ENCODE measurements at regions of chr3 and their contacts with region 1.

Region 1: GRCh38 chr3:120348981-120349818 is at the start of gene LRRC58:
- DNase-seq: peak; percentile 85
- H3K4me3 Mint-ChIP-seq: peak within 1 kb of the TSS; percentile 89
- H3K27ac Mint-ChIP-seq: peak within 1 kb of the TSS; percentile 89
- H3K4me1 Mint-ChIP-seq: peaks cover 40% of the 10 kb centered on the region
- H3K27me3 Mint-ChIP-seq: no peaks in the 10 kb centered on the region
- total RNA-seq, gene LRRC58: 17.6 to 18.0 TPM

Region 2: GRCh38 chr3:119293871-119294695 is 1055.1 kb before region 1 on chr3 and contains the start of gene ARHGAP31:
- CTCF ChIA-PET with region 1: no interaction called
- intact Hi-C with region 1: loop called (anchors 10 kb)
- DNase-seq: peak; percentile 94
- H3K4me3 Mint-ChIP-seq: peak within 1 kb of the TSS; percentile 82
- H3K27ac Mint-ChIP-seq: peak within 1 kb of the TSS; percentile 92
- H3K4me1 Mint-ChIP-seq: peaks cover 36% of the 10 kb centered on the region
- H3K27me3 Mint-ChIP-seq: no peaks in the 10 kb centered on the region
- total RNA-seq, gene ARHGAP31: 3.5 to 3.7 TPM

Region 3: GRCh38 chr3:119637679-119638525 is 711.3 kb before region 1 on chr3:
- CTCF ChIA-PET with region 1: no interaction called
- intact Hi-C with region 1: loop called (anchors 1 kb)
- DNase-seq: peak; percentile 19
- H3K4me3 Mint-ChIP-seq: no peak overlapping the region
- H3K27ac Mint-ChIP-seq: peak overlapping the region; percentile 91
- H3K4me1 Mint-ChIP-seq: peaks cover 36% of the 10 kb centered on the region
- H3K27me3 Mint-ChIP-seq: no peaks in the 10 kb centered on the region

Region 4: DNA sequence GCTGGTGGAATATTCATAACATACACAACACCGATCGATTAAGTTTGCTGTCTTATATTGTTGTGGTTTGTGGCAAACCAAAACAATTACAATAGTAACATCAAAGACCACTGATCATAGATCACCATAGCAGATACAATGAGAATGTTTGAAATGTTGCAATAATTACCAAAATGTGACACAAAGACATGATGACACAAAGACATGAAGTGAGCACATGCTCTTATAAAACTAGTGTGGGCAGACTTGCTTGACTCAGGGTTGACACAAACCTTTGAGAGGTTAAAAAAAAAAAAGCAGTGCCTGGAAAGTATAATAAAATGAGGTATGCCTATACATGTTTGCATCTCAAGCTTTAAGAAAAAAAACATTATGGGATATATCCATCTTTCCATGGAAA is 437.0 kb before region 1 on chr3:
- CTCF ChIA-PET with region 1: no interaction called
- intact Hi-C with region 1: loop called (anchors 1 kb)
- DNase-seq: no peak
- H3K4me3 Mint-ChIP-seq: no peak overlapping the region
- H3K27ac Mint-ChIP-seq: peak overlapping the region; percentile 77
- H3K4me1 Mint-ChIP-seq: peaks cover 33% of the 10 kb centered on the region
- H3K27me3 Mint-ChIP-seq: no peaks in the 10 kb centered on the region

Region 5: GRCh38 chr3:120274739-120275167 is 74.4 kb before region 1 on chr3:
- CTCF ChIA-PET with region 1: no interaction called
- intact Hi-C with region 1: no loop called
- DNase-seq: no peak
- H3K4me3 Mint-ChIP-seq: no peak overlapping the region
- H3K27ac Mint-ChIP-seq: no peak overlapping the region
- H3K4me1 Mint-ChIP-seq: no peaks in the 10 kb centered on the region
- H3K27me3 Mint-ChIP-seq: peaks cover 13% of the 10 kb centered on the region

Region 6: DNA sequence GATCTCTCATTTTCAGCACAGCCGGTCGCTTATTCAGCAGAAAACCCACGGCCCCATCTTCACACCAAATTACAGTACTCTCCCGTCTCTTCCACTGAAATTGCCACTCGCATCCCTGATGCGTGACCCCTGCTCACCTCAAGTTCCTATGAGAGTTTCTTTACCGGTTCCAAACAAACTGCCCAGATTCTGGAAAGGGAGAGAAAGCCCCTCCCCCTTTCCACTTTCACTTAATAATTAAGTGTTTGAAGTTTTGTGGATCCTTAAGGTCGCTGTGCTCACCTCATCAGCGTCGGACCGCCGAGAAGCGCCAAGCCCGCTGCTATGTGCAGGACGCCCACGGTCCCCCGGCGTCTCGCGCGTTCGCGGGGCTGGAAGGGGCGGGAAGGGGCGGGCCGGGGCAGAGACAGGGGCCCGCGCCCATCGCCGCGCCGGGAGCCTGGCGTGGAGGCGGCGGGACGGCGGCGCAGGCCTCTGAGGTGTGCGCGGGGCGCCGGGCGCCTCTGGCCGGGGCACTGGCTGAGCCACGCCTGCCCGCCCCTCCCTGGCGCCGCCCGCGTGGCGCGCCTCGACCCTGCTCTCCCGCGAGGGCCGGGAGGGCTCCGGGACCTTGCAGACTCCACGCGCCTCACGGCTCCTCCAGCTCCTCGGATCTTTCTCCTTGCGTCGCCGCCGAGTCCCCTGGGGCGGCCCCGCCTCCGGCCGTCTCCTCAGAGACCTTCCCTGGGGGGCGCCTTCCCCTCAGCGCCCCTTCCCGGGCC is 64.3 kb before region 1 on chr3 and contains the start of gene GPR156:
- CTCF ChIA-PET with region 1: no interaction called
- intact Hi-C with region 1: no loop called
- DNase-seq: no peak
- H3K4me3 Mint-ChIP-seq: peak within 1 kb of the TSS; percentile 28
- H3K27ac Mint-ChIP-seq: no peak within 1 kb of the TSS
- H3K4me1 Mint-ChIP-seq: peaks cover 7% of the 10 kb centered on the region
- H3K27me3 Mint-ChIP-seq: peaks cover 59% of the 10 kb centered on the region
- total RNA-seq, gene GPR156: not detected

Region 7: GRCh38 chr3:120417272-120417911 is 68.2 kb after region 1 on chr3:
- CTCF ChIA-PET with region 1: interaction called, 9 read pairs
- intact Hi-C with region 1: loop called (anchors 1 kb)
- DNase-seq: peak; percentile 96
- H3K4me3 Mint-ChIP-seq: peak overlapping the region; percentile 74
- H3K27ac Mint-ChIP-seq: peak overlapping the region; percentile 32
- H3K4me1 Mint-ChIP-seq: peaks cover 8% of the 10 kb centered on the region
- H3K27me3 Mint-ChIP-seq: no peaks in the 10 kb centered on the region

Region 8: GRCh38 chr3:120742198-120742849 is 393.1 kb after region 1 on chr3 and contains the starts of genes GTF2E1 and RABL3:
- CTCF ChIA-PET with region 1: no interaction called
- intact Hi-C with region 1: loop called (anchors 1 kb)
- DNase-seq: peak; percentile 98
- H3K4me3 Mint-ChIP-seq: peak within 1 kb of the TSS; percentile 90
- H3K27ac Mint-ChIP-seq: peak within 1 kb of the TSS; percentile 96
- H3K4me1 Mint-ChIP-seq: peaks cover 33% of the 10 kb centered on the region
- H3K27me3 Mint-ChIP-seq: no peaks in the 10 kb centered on the region
- total RNA-seq, gene GTF2E1: 13.2 TPM
- total RNA-seq, gene RABL3: 34.7 to 36.8 TPM

Measured in activated naive CD4-positive, alpha-beta T cell treated with anti-CD3 and anti-CD28 coated beads for 36 hours (primary cell).